ENCODE measurements at regions of chr17 and their contacts with region 1.

Region 1: GRCh38 chr17:27293898-27294688 is at the start of gene WSB1:
- DNase-seq: peak; percentile 97
- ATAC-seq: peak; percentile 86
- H3K4me3 ChIP-seq: peak within 1 kb of the TSS; percentile 89 to 100 (median 96)
- H3K4me3 Mint-ChIP-seq: peak within 1 kb of the TSS; percentile 89
- H3K27ac ChIP-seq: peak within 1 kb of the TSS; percentile 99
- H3K27ac Mint-ChIP-seq: peak within 1 kb of the TSS; percentile 99
- H3K4me1 ChIP-seq: peaks cover 37 to 39% of the 10 kb centered on the region in 2 donors
- H3K4me1 Mint-ChIP-seq: peaks cover 45% of the 10 kb centered on the region
- H3K27me3 ChIP-seq: no peaks in the 10 kb centered on the region
- H3K27me3 Mint-ChIP-seq: no peaks in the 10 kb centered on the region
- CTCF ChIP-seq: no peak
- total RNA-seq, gene WSB1: 215 and 217 TPM in 2 replicates

Region 2: GRCh38 chr17:27217631-27218030 is 76.5 kb before region 1 on chr17:
- CTCF ChIA-PET with region 1: interaction called, 4 read pairs
- POLR2A ChIA-PET with region 1: interaction called, 5 read pairs
- intact Hi-C with region 1: loop called (anchors 1 kb)
- DNase-seq: peak; percentile 94
- ATAC-seq: peak; percentile 85
- H3K4me3 ChIP-seq: peak overlapping the region in 1 of 5 experiments; percentile 9
- H3K4me3 Mint-ChIP-seq: peak overlapping the region; percentile 64
- H3K27ac ChIP-seq: peak overlapping the region; percentile 85 to 98
- H3K27ac Mint-ChIP-seq: peak overlapping the region; percentile 96
- H3K4me1 ChIP-seq: peaks cover 34 to 41% of the 10 kb centered on the region in 2 donors
- H3K4me1 Mint-ChIP-seq: peaks cover 48% of the 10 kb centered on the region
- H3K27me3 ChIP-seq: no peaks in the 10 kb centered on the region
- H3K27me3 Mint-ChIP-seq: no peaks in the 10 kb centered on the region
- CTCF ChIP-seq: no peak

Region 3: GRCh38 chr17:27245230-27245696 is 48.8 kb before region 1 on chr17:
- CTCF ChIA-PET with region 1: interaction called, 15 read pairs
- POLR2A ChIA-PET with region 1: interaction called, 4 read pairs
- intact Hi-C with region 1: loop called (anchors 2 kb)
- DNase-seq: peak; percentile 79
- ATAC-seq: peak; percentile 97
- H3K4me3 ChIP-seq: no peak overlapping the region
- H3K4me3 Mint-ChIP-seq: peak overlapping the region; percentile 33
- H3K27ac ChIP-seq: no peak overlapping the region
- H3K27ac Mint-ChIP-seq: peak overlapping the region; percentile 53
- H3K4me1 ChIP-seq: peaks cover 9 to 21% of the 10 kb centered on the region in 2 donors
- H3K4me1 Mint-ChIP-seq: peaks cover 27% of the 10 kb centered on the region
- H3K27me3 ChIP-seq: no peaks in the 10 kb centered on the region
- H3K27me3 Mint-ChIP-seq: no peaks in the 10 kb centered on the region
- CTCF ChIP-seq: peak; percentile 74

Region 4: DNA sequence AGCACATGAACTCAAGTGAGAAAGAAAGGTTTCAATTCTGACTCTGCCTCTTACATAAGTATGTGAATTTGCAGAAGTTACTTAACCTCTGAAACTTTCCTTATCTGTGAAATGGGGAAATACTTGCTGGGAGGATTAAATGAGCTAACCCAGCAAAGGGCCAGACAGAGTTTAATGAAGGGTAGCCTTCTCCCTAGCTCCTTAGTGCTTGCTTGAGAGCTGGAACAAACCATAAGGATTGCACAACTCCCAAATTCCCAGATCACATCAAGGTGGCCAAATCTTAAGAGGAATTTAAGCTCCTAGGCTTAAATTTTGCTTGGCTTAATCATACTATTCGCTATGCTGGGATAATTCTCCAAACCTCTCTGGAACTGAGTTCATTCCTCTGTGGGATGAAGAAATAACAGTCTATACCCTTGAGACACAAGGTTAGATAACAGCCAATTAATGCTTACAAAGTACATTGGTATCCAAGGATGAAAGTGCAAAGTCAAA is 12.0 kb before region 1 on chr17:
- CTCF ChIA-PET with region 1: interaction called, 5 read pairs
- POLR2A ChIA-PET with region 1: interaction called, 24 read pairs
- intact Hi-C with region 1: loop called (anchors 1 kb)
- DNase-seq: peak; percentile 68
- ATAC-seq: peak; percentile 78
- H3K4me3 ChIP-seq: peak overlapping the region in 2 of 5 experiments; percentile 0 to 42
- H3K4me3 Mint-ChIP-seq: peak overlapping the region; percentile 66
- H3K27ac ChIP-seq: peak overlapping the region; percentile 80 to 86
- H3K27ac Mint-ChIP-seq: peak overlapping the region; percentile 89
- H3K4me1 ChIP-seq: peaks cover 60 to 62% of the 10 kb centered on the region in 2 donors
- H3K4me1 Mint-ChIP-seq: peaks cover 57% of the 10 kb centered on the region
- H3K27me3 ChIP-seq: no peaks in the 10 kb centered on the region
- H3K27me3 Mint-ChIP-seq: no peaks in the 10 kb centered on the region
- CTCF ChIP-seq: no peak

Region 5: GRCh38 chr17:27423651-27424050 is 129.6 kb after region 1 on chr17:
- CTCF ChIA-PET with region 1: no interaction called
- POLR2A ChIA-PET with region 1: no interaction called
- intact Hi-C with region 1: no loop called
- DNase-seq: no peak
- ATAC-seq: no peak
- H3K4me3 ChIP-seq: no peak overlapping the region
- H3K4me3 Mint-ChIP-seq: no peak overlapping the region
- H3K27ac ChIP-seq: no peak overlapping the region
- H3K27ac Mint-ChIP-seq: no peak overlapping the region
- H3K4me1 ChIP-seq: no peaks in the 10 kb centered on the region
- H3K4me1 Mint-ChIP-seq: no peaks in the 10 kb centered on the region
- H3K27me3 ChIP-seq: no peaks in the 10 kb centered on the region
- H3K27me3 Mint-ChIP-seq: no peaks in the 10 kb centered on the region
- CTCF ChIP-seq: no peak

Region 6: DNA sequence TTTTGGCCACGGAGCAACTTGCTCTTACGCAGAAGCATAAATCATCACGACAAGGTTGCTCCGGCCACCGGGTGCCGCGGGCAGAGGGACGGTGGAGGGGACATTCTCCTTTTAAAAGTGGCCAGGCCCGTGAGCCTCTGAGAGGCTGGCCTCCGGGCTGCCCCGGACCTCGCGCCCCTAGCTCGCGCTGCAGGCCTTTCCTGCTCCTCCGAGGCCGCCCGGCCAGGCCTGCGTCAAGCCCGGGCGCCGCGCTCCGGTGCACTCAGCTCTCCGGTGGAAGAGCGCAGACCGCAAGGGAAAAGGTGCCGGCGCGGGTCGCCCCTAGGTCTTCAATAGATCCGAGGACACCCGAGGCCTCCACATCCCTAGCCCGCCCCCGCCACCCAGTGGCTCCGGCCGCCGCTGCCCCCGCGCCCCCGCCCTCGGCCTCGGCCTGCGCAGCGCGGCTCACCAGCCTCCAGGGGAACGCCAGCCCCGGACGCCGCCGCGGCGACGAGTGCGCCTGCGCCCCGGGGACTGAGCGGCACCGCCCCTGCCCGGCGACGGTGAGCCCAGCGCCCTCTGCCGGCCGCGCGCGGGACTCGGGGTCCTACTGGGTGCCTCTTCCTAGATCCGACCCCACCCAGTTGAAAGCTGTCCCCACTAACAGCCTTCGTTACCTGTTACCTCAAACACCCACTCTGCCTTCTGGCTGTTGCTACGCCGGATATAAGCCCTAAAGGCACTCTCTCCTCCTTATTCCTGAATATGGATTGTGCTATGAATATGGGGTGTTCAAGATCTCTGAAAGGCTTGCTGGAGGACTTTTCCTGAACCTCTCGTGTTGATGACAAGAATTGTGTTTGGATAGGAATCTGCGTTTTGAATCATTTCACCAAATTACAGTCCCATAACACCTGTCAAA is 599.0 kb after region 1 on chr17 and contains the start of gene LYRM9:
- CTCF ChIA-PET with region 1: no interaction called
- POLR2A ChIA-PET with region 1: no interaction called
- intact Hi-C with region 1: loop called (anchors 10 kb)
- DNase-seq: peak; percentile 93
- ATAC-seq: peak; percentile 98
- H3K4me3 ChIP-seq: peak within 1 kb of the TSS; percentile 58 to 82 (median 71)
- H3K4me3 Mint-ChIP-seq: peak within 1 kb of the TSS; percentile 80
- H3K27ac ChIP-seq: peak within 1 kb of the TSS; percentile 12 to 57
- H3K27ac Mint-ChIP-seq: peak within 1 kb of the TSS; percentile 77
- H3K4me1 ChIP-seq: peaks cover 16 to 23% of the 10 kb centered on the region in 2 donors
- H3K4me1 Mint-ChIP-seq: peaks cover 23% of the 10 kb centered on the region
- H3K27me3 ChIP-seq: no peaks in the 10 kb centered on the region
- H3K27me3 Mint-ChIP-seq: peaks cover 4% of the 10 kb centered on the region
- CTCF ChIP-seq: peak; percentile 91
- total RNA-seq, gene LYRM9: 12.1 and 14.0 TPM in 2 replicates

Measured in B cell (primary cell).